ENCODE measurements at regions of chr9 and their contacts with region 1.

Region 1: GRCh38 chr9:127943731-127944144 is 6.1 kb upstream of the DPM2 start:
- DNase-seq: peak; percentile 86
- ATAC-seq: peak; percentile 88
- H3K4me3 ChIP-seq: no peak overlapping the region
- H3K4me3 Mint-ChIP-seq: no peak overlapping the region
- H3K27ac ChIP-seq: peak overlapping the region; percentile 12 to 54
- H3K27ac Mint-ChIP-seq: peak overlapping the region; percentile 76
- H3K4me1 ChIP-seq: peaks cover 17 to 18% of the 10 kb centered on the region in 2 donors
- H3K4me1 Mint-ChIP-seq: peaks cover 27% of the 10 kb centered on the region
- H3K27me3 ChIP-seq: no peaks in the 10 kb centered on the region
- H3K27me3 Mint-ChIP-seq: no peaks in the 10 kb centered on the region
- CTCF ChIP-seq: peak; percentile 85

Region 2: DNA sequence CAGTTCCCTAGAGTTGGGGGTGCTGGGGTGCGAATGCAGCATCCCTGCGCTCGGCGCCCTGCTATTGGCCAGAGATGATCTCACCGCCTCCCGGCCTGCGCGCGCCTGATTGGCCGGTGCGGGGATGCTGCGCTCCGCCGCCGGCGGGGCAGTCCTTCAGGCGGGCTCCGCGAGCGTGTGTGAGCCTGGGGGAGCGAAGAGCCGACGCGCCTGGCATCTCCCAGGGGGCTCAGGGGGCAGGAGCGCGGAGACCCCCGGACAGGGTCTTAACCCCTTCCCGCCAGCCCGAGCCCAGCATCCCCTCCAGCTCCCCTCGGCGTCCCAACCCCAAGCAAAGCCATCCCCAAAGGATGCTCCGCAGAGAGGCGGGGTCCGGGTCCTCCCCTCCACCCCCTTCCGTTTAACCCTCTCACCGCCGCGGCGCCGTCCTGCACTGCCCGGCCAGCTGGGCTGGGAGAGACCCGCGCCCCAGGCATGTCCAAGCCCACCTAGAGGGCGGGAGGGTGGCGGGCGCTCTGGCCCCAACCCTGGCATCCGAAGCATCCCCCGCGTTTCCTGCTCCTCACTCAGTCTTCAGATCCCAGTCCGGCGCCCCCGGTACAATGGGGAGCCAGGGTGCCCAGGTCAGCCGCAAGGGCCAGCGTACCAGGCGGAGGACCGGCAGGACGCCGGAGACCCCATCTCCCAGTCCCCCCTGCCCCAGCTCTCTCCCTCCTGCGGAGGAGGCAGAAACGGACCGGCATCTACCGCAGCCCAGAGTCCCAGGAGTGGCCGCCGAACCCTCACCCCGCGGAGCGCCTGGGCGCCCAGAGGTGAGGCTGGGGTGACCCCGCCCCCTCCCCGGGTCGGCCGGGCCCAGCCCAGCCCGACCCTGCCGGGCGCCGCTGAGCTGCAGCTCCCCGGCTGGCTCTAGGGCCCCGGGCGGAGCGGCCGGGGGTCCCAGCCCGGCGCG is 189.4 kb before region 1 on chr9:
- CTCF ChIA-PET with region 1: no interaction called
- POLR2A ChIA-PET with region 1: no interaction called
- intact Hi-C with region 1: no loop called
- DNase-seq: no peak
- ATAC-seq: no peak
- H3K4me3 ChIP-seq: no peak overlapping the region
- H3K4me3 Mint-ChIP-seq: no peak overlapping the region
- H3K27ac ChIP-seq: no peak overlapping the region
- H3K27ac Mint-ChIP-seq: no peak overlapping the region
- H3K4me1 ChIP-seq: no peaks in the 10 kb centered on the region
- H3K4me1 Mint-ChIP-seq: peaks cover 11% of the 10 kb centered on the region
- H3K27me3 ChIP-seq: no peaks in the 10 kb centered on the region
- H3K27me3 Mint-ChIP-seq: no peaks in the 10 kb centered on the region
- CTCF ChIP-seq: no peak

Region 3: DNA sequence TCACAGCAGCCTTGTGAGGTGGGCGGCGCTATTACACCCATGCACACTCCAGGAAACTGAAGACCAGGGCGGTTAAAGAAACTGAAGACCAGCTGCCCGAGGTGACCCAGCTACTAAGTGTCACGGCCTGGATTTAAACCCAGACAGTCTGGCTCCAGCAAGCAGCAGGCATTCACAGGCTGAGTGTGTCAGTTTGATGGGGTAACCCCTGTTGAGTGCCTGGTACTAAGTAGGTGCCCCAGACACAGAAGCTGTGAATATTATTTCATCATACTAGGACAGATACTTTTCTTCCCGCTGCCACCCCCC is 96.6 kb before region 1 on chr9:
- CTCF ChIA-PET with region 1: no interaction called
- POLR2A ChIA-PET with region 1: no interaction called
- intact Hi-C with region 1: no loop called
- DNase-seq: no peak
- ATAC-seq: no peak
- H3K4me3 ChIP-seq: no peak overlapping the region
- H3K4me3 Mint-ChIP-seq: no peak overlapping the region
- H3K27ac ChIP-seq: no peak overlapping the region
- H3K27ac Mint-ChIP-seq: no peak overlapping the region
- H3K4me1 ChIP-seq: peaks cover 0 to 3% of the 10 kb centered on the region in 2 donors
- H3K4me1 Mint-ChIP-seq: peaks cover 2% of the 10 kb centered on the region
- H3K27me3 ChIP-seq: no peaks in the 10 kb centered on the region
- H3K27me3 Mint-ChIP-seq: no peaks in the 10 kb centered on the region
- CTCF ChIP-seq: no peak

Region 4: DNA sequence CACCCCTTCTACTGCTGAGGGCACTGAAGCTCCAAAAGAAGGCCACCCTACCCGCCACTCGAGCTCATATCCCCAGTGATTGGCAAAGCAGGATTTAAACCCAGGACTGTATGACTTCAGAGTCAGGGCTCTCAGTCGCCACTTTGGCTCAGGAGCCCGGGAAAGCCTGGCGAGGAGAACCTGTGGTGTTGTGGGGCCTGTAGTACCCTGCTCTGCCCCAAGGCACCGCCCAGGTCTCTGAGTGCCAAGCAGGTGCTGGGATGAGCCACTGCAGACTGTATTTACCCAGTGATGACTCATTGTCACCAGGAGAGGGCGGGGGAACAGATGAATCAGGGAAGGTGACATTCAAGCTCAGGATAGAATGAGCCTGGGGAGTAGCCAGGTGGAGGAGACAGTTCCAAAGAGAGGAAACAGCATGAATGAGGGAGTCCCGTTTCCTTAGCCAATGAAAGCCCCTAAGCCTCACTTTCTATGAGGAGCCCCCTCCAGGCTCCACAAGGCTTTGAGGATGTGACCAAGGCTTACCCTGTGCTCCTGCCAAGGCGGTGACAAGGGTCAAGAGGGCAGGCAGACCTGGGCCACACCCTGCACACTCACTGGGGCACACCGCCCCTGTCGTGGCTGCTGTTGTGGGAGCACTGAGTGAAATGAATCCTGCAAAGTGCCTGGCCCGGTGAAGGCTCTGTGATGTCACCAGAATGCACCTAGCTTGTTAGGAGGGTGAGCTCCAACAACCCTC is 11.7 kb after region 1 on chr9:
- CTCF ChIA-PET with region 1: interaction called, 85 read pairs
- POLR2A ChIA-PET with region 1: no interaction called
- intact Hi-C with region 1: no loop called
- DNase-seq: peak; percentile 77
- ATAC-seq: peak; percentile 97
- H3K4me3 ChIP-seq: no peak overlapping the region
- H3K4me3 Mint-ChIP-seq: peak overlapping the region; percentile 16
- H3K27ac ChIP-seq: peak overlapping the region in 1 of 2 donors; percentile 46
- H3K27ac Mint-ChIP-seq: peak overlapping the region; percentile 80
- H3K4me1 ChIP-seq: peaks cover 8 to 30% of the 10 kb centered on the region in 2 donors
- H3K4me1 Mint-ChIP-seq: peaks cover 53% of the 10 kb centered on the region
- H3K27me3 ChIP-seq: no peaks in the 10 kb centered on the region
- H3K27me3 Mint-ChIP-seq: no peaks in the 10 kb centered on the region
- CTCF ChIP-seq: peak; percentile 63

Region 5: GRCh38 chr9:127970401-127971313 is 26.9 kb after region 1 on chr9:
- CTCF ChIA-PET with region 1: interaction called, 11 read pairs
- POLR2A ChIA-PET with region 1: no interaction called
- intact Hi-C with region 1: no loop called
- DNase-seq: peak; percentile 87
- ATAC-seq: peak; percentile 69
- H3K4me3 ChIP-seq: peak overlapping the region in 3 of 5 experiments; percentile 5 to 18 (median 6)
- H3K4me3 Mint-ChIP-seq: peak overlapping the region; percentile 77
- H3K27ac ChIP-seq: peak overlapping the region; percentile 91 to 97
- H3K27ac Mint-ChIP-seq: peak overlapping the region; percentile 96
- H3K4me1 ChIP-seq: peaks cover 99 to 100% of the 10 kb centered on the region in 2 donors
- H3K4me1 Mint-ChIP-seq: peaks cover 98% of the 10 kb centered on the region
- H3K27me3 ChIP-seq: no peaks in the 10 kb centered on the region
- H3K27me3 Mint-ChIP-seq: no peaks in the 10 kb centered on the region
- CTCF ChIP-seq: no peak

Region 6: GRCh38 chr9:128026773-128027541 is 83.2 kb after region 1 on chr9:
- CTCF ChIA-PET with region 1: interaction called, 36 read pairs
- POLR2A ChIA-PET with region 1: interaction called, 6 read pairs
- intact Hi-C with region 1: no loop called
- DNase-seq: no peak
- ATAC-seq: peak; percentile 4
- H3K4me3 ChIP-seq: peak overlapping the region in 1 of 5 experiments; percentile 22
- H3K4me3 Mint-ChIP-seq: peak overlapping the region; percentile 81
- H3K27ac ChIP-seq: peak overlapping the region; percentile 88 to 100
- H3K27ac Mint-ChIP-seq: peak overlapping the region; percentile 96
- H3K4me1 ChIP-seq: peaks cover 73 to 94% of the 10 kb centered on the region in 2 donors
- H3K4me1 Mint-ChIP-seq: peaks cover 78% of the 10 kb centered on the region
- H3K27me3 ChIP-seq: no peaks in the 10 kb centered on the region
- H3K27me3 Mint-ChIP-seq: no peaks in the 10 kb centered on the region
- CTCF ChIP-seq: no peak

Region 7: DNA sequence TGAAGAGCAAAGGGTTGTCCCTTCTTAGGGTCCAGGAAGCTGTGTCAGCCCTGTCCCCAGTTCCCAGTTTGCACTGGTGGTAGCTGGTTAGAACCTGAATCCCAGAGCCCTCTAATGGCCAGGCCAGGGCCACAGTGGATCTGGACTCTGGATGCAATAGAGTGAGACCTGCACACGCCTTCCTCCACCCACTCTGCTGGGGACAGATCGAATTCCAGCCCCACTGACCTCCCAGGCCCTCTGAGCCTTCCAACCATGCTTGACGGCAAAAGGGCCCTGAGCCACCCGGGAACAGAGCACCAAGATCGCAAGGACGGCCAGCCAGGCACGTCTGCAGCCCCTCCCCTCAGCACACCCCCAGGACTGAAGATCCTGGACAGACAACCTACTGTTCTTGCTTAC is 99.7 kb after region 1 on chr9:
- CTCF ChIA-PET with region 1: interaction called, 310 read pairs
- POLR2A ChIA-PET with region 1: interaction called, 3 read pairs
- intact Hi-C with region 1: no loop called
- DNase-seq: no peak
- ATAC-seq: no peak
- H3K4me3 ChIP-seq: no peak overlapping the region
- H3K4me3 Mint-ChIP-seq: no peak overlapping the region
- H3K27ac ChIP-seq: no peak overlapping the region
- H3K27ac Mint-ChIP-seq: no peak overlapping the region
- H3K4me1 ChIP-seq: no peaks in the 10 kb centered on the region
- H3K4me1 Mint-ChIP-seq: no peaks in the 10 kb centered on the region
- H3K27me3 ChIP-seq: no peaks in the 10 kb centered on the region
- H3K27me3 Mint-ChIP-seq: peaks cover 3% of the 10 kb centered on the region
- CTCF ChIP-seq: no peak

Region 8: DNA sequence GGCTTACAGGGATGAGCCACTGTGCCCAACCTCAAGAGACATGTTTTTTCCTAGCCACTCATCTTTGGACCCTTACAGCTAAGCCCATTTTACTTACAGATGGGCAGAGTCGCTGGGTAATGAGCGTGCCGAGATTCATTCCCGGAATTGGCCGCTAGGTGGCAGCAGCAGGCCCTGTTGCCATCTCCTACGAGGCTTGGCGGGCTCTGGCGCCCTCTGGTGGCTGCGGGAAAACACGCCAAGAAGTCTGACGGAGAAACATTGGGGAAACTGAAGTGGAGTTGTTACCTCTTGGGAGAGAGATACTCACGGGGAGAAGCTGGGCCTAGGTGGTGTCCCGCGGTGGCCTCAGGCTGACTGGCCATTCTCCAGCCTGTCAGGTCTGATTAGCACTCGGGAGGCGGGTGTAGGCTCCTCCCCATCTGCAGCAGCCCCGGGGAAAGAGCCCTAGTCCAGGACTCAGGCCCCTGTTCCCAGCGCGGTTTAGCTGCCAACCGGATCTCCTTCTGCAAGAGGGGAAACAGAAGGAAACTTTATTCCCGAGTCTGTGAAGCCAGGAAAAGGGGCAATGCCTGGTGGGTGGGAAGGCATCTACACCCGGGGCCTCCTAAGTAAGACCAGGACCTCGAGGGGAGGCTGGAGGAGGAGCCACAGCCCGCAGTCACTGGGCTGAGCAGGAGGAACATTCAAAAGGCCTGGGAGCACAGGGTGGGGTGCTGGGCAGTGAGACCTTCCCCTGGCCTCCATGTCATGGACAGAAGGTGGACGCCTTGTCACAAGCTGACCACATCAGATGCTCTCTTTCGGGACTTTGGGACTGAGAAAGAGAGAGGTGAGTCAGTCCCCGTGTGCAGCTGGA is 174.1 kb after region 1 on chr9:
- CTCF ChIA-PET with region 1: interaction called, 48 read pairs
- POLR2A ChIA-PET with region 1: no interaction called
- intact Hi-C with region 1: loop called (anchors 1 kb)
- DNase-seq: peak; percentile 94
- ATAC-seq: peak; percentile 52
- H3K4me3 ChIP-seq: no peak overlapping the region
- H3K4me3 Mint-ChIP-seq: no peak overlapping the region
- H3K27ac ChIP-seq: no peak overlapping the region
- H3K27ac Mint-ChIP-seq: peak overlapping the region; percentile 78
- H3K4me1 ChIP-seq: peaks cover 37 to 42% of the 10 kb centered on the region in 2 donors
- H3K4me1 Mint-ChIP-seq: peaks cover 38% of the 10 kb centered on the region
- H3K27me3 ChIP-seq: no peaks in the 10 kb centered on the region
- H3K27me3 Mint-ChIP-seq: no peaks in the 10 kb centered on the region
- CTCF ChIP-seq: peak; percentile 100

Measured in B cell (primary cell).